Mammary epithelial cell (primary cell): ENCODE measurements at regions of chr2 and their contacts with region 1.

Region 1: GRCh38 chr2:27409321-27410073 is at the start of gene PPM1G:
- DNase-seq: peak; percentile 94
- H3K4me3 ChIP-seq: peak within 1 kb of the TSS; percentile 93 to 100 (median 96)
- H3K27ac ChIP-seq: peak within 1 kb of the TSS; percentile 82
- H3K4me1 ChIP-seq: peaks cover 11% of the 10 kb centered on the region
- H3K27me3 ChIP-seq: no peaks in the 10 kb centered on the region
- CTCF ChIP-seq: no peak
- total RNA-seq, gene PPM1G: 58.8 to 113 TPM

Region 2: GRCh38 chr2:27308359-27308881 is 101.1 kb before region 1 on chr2 and contains the start of gene UCN:
- CTCF ChIA-PET with region 1: no interaction called
- dilution Hi-C with region 1: no loop called
- in situ Hi-C with region 1: no loop called
- intact Hi-C with region 1: no loop called
- DNase-seq: peak; percentile 27
- H3K4me3 ChIP-seq: no peak within 1 kb of the TSS
- H3K27ac ChIP-seq: no peak within 1 kb of the TSS
- H3K4me1 ChIP-seq: peaks cover 3% of the 10 kb centered on the region
- H3K27me3 ChIP-seq: peaks cover 22% of the 10 kb centered on the region
- CTCF ChIP-seq: no peak
- total RNA-seq, gene UCN: 0.33 to 0.40 TPM

Region 3: DNA sequence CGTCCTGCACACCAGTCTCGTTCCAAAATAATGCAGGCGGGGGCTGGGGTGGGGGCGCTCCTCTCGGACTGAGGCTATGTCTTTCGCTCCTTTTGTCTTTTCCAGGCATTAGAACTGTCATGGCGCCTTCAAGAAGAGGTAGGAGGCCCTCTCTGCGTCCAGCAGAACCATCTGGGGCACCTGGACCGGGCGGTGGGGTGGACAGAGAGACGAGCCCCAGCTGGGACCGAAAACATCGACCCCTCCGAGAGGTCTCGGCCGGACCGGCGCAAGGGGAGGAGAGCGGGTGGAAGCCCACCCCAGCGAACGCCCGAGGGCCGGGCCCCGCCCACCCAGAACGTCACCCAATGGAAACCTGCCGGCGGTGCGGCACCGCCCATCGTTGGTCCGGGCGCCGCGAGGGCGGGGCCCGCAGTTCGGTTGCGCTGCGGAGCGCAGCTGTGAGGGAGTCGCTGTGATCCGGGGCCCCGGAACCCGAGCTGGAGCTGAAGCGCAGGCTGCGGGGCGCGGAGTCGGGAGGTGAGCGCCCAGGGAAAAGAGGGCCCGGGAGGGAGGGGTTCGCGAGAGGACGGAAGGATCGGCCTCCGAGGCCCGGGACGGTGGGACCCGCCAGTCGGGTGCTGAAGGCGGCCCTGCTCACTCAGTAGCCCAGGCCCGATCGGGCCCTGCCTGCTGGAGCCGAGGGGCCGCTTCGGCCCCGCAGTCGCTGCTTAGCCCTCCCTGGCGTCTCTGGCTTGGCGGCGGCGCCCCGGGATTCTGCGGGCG is 18.9 kb after region 1 on chr2 and contains the start of gene NRBP1:
- CTCF ChIA-PET with region 1: interaction called, 3 read pairs
- dilution Hi-C with region 1: no loop called
- in situ Hi-C with region 1: no loop called
- intact Hi-C with region 1: loop called (anchors 1 kb)
- DNase-seq: peak; percentile 89
- H3K4me3 ChIP-seq: peak within 1 kb of the TSS; percentile 86 to 100 (median 92)
- H3K27ac ChIP-seq: peak within 1 kb of the TSS; percentile 86
- H3K4me1 ChIP-seq: peaks cover 14% of the 10 kb centered on the region
- H3K27me3 ChIP-seq: no peaks in the 10 kb centered on the region
- CTCF ChIP-seq: peak in 1 of 2 donors; percentile 5
- total RNA-seq, gene NRBP1: 92.9 to 93.4 TPM

Region 4: GRCh38 chr2:27489498-27490397 is 80.3 kb after region 1 on chr2 and contains the start of gene IFT172:
- CTCF ChIA-PET with region 1: no interaction called
- dilution Hi-C with region 1: no loop called
- in situ Hi-C with region 1: no loop called
- intact Hi-C with region 1: loop called (anchors 2 kb)
- DNase-seq: peak; percentile 99
- H3K4me3 ChIP-seq: peak within 1 kb of the TSS; percentile 38 to 70 (median 65)
- H3K27ac ChIP-seq: peak within 1 kb of the TSS; percentile 74
- H3K4me1 ChIP-seq: peaks cover 23% of the 10 kb centered on the region
- H3K27me3 ChIP-seq: no peaks in the 10 kb centered on the region
- CTCF ChIP-seq: no peak
- total RNA-seq, gene IFT172: 11.5 to 12.1 TPM

Region 5: DNA sequence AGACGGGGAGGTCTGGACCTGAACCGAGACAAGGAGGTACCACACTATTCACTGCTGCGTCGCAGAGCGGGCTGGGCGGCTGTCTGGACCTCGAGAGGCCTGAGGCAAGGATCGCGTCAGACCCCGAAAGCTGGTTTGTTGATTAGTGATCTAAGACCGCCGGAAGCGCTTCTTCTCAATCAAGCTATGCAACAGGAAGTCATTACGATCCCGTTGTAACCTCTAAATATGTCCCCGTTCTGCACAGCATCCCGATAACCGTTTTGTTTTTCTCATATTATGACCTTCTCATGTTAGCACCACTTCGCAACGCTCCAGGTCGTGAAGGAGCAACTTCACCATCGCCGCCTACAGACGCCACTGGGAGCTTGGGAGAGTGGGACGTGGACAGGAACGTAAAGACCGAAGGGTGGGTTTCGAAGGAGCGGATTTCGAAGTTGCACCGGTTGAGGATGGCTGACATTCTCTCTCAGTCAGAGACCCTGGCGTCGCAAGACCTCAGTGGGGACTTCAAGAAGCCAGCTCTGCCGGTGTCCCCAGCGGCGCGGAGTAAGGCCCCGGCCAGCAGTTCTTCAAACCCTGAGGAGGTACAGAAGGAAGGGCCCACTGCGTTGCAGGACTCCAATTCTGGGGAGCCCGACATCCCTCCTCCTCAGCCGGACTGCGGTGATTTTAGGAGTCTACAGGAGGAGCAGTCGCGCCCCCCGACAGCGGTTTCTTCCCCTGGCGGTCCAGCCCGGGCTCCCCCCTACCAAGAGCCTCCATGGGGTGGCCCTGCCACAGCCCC is 254.2 kb after region 1 on chr2 and contains the starts of genes SLC4A1AP and SUPT7L:
- CTCF ChIA-PET with region 1: no interaction called
- dilution Hi-C with region 1: no loop called
- in situ Hi-C with region 1: no loop called
- intact Hi-C with region 1: loop called (anchors 1 kb)
- DNase-seq: peak; percentile 85
- H3K4me3 ChIP-seq: peak within 1 kb of the TSS; percentile 70 to 82 (median 77)
- H3K27ac ChIP-seq: peak within 1 kb of the TSS; percentile 87
- H3K4me1 ChIP-seq: peaks cover 20% of the 10 kb centered on the region
- H3K27me3 ChIP-seq: no peaks in the 10 kb centered on the region
- CTCF ChIP-seq: peak in 1 of 2 donors; percentile 17
- total RNA-seq, gene SLC4A1AP: 23.8 to 26.1 TPM
- total RNA-seq, gene SUPT7L: 31.2 to 46.2 TPM